Activated CD8-positive, alpha-beta T cell treated with anti-CD3 and anti-CD28 coated beads for 36 hours (primary cell): ENCODE measurements at regions of chr18 and their contacts with region 1.

Region 1: GRCh38 chr18:59823596-59824195 is 76.1 kb upstream of the PMAIP1 start:
- DNase-seq: peak; percentile 69
- ATAC-seq: peak; percentile 81
- H3K4me3 Mint-ChIP-seq: no peak overlapping the region
- H3K27ac Mint-ChIP-seq: no peak overlapping the region
- H3K4me1 Mint-ChIP-seq: no peaks in the 10 kb centered on the region
- H3K27me3 Mint-ChIP-seq: peaks cover 8% of the 10 kb centered on the region
- CTCF ChIP-seq: peak; percentile 72

Region 2: GRCh38 chr18:59459369-59460079 is 364.2 kb before region 1 on chr18:
- CTCF ChIA-PET with region 1: interaction called, 76 read pairs
- POLR2A ChIA-PET with region 1: no interaction called
- intact Hi-C with region 1: loop called (anchors 10 kb)
- DNase-seq: no peak
- ATAC-seq: no peak
- H3K4me3 Mint-ChIP-seq: no peak overlapping the region
- H3K27ac Mint-ChIP-seq: no peak overlapping the region
- H3K4me1 Mint-ChIP-seq: no peaks in the 10 kb centered on the region
- H3K27me3 Mint-ChIP-seq: peaks cover 8% of the 10 kb centered on the region
- CTCF ChIP-seq: peak; percentile 57

Region 3: DNA sequence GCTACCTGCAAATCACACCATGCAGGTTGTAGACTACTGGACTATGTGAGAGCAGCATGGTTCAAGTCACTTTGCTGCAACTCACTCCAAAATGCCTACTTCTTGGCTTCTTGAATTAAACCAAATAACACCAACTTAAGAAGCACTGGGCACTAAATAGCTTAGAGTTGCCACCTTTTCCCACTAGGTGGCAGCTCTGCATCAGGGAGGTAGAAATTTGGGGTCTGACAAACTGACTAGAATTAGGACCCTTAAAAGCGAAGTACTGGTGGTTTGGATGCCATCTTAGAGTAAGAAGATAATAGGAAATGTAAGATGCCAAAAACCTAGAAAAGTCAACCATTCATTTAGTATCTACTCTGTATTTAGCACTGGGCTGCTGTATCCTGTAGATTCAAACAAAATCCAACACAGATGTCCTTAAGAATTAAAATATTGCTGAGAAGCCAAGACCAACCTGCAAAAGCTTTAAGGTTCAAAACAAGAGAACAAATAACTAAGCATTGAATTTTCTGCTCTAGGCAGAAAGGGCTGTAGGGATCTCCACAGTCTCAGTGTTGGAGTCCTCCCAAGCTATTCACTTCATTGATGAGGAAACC is 192.0 kb before region 1 on chr18:
- CTCF ChIA-PET with region 1: interaction called, 19 read pairs
- POLR2A ChIA-PET with region 1: no interaction called
- intact Hi-C with region 1: no loop called
- DNase-seq: peak; percentile 18
- ATAC-seq: no peak
- H3K4me3 Mint-ChIP-seq: no peak overlapping the region
- H3K27ac Mint-ChIP-seq: no peak overlapping the region
- H3K4me1 Mint-ChIP-seq: no peaks in the 10 kb centered on the region
- H3K27me3 Mint-ChIP-seq: peaks cover 3% of the 10 kb centered on the region
- CTCF ChIP-seq: peak; percentile 12

Region 4: DNA sequence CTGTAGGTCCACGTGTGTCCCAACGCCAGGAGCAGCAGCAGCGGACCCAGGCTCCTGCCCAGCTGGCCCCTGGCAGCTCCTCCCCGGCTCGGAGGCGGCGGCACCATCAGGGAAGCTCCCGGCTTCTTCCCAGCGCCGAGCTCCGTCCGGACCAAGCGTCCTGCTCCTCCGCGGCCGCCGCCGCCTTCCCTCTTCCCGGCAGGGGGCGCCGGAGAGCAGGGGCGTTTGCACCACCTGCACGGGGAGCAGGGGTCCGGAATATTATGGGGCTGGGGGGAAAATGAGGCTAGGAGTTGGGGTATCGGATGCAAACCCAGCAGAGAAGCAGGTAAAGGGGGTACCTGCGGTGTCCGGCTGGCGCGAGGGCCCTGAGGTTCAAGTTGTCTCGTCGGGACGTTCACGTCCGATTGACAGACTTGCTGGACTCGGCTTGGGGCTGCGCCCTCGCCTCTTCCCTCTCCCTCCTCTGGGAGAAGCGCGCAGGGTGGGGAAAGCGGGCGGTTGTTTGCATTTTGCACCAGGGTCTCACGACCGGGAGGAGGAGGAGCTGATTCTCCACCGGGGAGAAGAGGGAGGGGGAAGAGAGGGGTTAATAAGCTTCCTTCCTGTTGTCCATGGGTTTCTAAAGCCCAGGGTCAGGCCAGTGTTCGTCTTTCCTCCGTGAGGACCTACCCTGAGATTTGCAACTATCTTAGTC is 126.3 kb before region 1 on chr18 and contains the start of gene CCBE1:
- CTCF ChIA-PET with region 1: interaction called, 23 read pairs
- POLR2A ChIA-PET with region 1: no interaction called
- intact Hi-C with region 1: no loop called
- DNase-seq: peak; percentile 55
- ATAC-seq: peak; percentile 53
- H3K4me3 Mint-ChIP-seq: no peak within 1 kb of the TSS
- H3K27ac Mint-ChIP-seq: no peak within 1 kb of the TSS
- H3K4me1 Mint-ChIP-seq: peaks cover 8% of the 10 kb centered on the region
- H3K27me3 Mint-ChIP-seq: peaks cover 52% of the 10 kb centered on the region
- CTCF ChIP-seq: peak; percentile 86
- total RNA-seq, gene CCBE1: not detected

Region 5: GRCh38 chr18:59783138-59783537 is 40.6 kb before region 1 on chr18:
- CTCF ChIA-PET with region 1: interaction called, 16 read pairs
- POLR2A ChIA-PET with region 1: no interaction called
- intact Hi-C with region 1: loop called (anchors 5 kb)
- DNase-seq: peak; percentile 47
- ATAC-seq: peak; percentile 51
- H3K4me3 Mint-ChIP-seq: no peak overlapping the region
- H3K27ac Mint-ChIP-seq: no peak overlapping the region
- H3K4me1 Mint-ChIP-seq: no peaks in the 10 kb centered on the region
- H3K27me3 Mint-ChIP-seq: peaks cover 3% of the 10 kb centered on the region
- CTCF ChIP-seq: peak; percentile 28

Region 6: DNA sequence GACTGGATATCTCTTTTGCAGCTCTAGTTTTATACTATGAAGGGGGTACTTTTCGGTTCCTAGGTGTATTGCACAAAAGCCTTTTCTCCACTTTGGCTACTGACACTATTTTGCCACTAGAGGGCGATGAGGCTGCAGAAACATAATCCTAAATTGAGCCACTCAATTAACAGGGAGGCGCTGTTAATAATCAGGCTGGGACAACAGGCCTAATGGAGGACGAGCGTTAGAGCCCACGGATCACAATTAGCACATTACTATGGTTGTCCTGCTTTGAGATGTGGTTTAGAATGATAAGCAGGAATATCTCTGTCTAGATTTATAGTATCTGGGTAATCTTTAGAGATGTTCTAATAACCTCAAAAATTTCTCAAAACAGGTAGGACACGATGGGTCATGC is 13.9 kb after region 1 on chr18:
- CTCF ChIA-PET with region 1: interaction called, 25 read pairs
- POLR2A ChIA-PET with region 1: no interaction called
- intact Hi-C with region 1: no loop called
- DNase-seq: peak; percentile 59
- ATAC-seq: peak; percentile 66
- H3K4me3 Mint-ChIP-seq: no peak overlapping the region
- H3K27ac Mint-ChIP-seq: no peak overlapping the region
- H3K4me1 Mint-ChIP-seq: peaks cover 7% of the 10 kb centered on the region
- H3K27me3 Mint-ChIP-seq: no peaks in the 10 kb centered on the region
- CTCF ChIP-seq: peak; percentile 81

Region 7: DNA sequence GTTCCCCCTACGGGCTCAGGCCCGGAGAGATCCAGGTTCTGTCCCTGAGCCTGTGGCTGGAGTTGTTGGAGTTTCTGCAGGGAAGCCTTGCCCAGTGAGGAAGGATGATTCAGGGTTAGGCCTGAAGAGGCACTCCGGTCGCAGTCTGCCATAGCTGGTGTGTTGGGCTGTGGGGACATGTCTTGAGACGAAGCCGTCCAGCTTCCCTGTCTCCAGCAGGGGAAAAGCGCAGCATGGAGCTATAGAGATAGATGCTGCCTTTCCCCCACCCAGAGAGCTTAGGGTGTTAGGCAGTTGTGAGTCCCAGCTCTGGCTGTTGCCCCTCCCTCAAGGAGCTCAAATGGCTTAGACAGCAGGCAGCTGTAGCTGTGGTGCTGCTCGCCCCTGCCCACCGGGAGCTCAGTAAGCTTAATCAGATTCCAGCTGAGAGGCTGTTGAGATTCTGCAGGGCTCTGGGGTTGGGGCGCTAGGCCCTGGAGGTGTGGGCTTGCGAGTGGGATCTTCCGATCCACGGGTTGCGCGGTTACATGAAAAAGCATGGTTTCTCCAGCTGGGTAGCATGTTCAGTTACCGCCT is 180.0 kb after region 1 on chr18:
- CTCF ChIA-PET with region 1: no interaction called
- POLR2A ChIA-PET with region 1: no interaction called
- intact Hi-C with region 1: no loop called
- DNase-seq: no peak
- ATAC-seq: no peak
- H3K4me3 Mint-ChIP-seq: no peak overlapping the region
- H3K27ac Mint-ChIP-seq: no peak overlapping the region
- H3K4me1 Mint-ChIP-seq: no peaks in the 10 kb centered on the region
- H3K27me3 Mint-ChIP-seq: peaks cover 13% of the 10 kb centered on the region
- CTCF ChIP-seq: no peak